ENCODE measurements at regions of chr17 and their contacts with region 1.

Region 1: DNA sequence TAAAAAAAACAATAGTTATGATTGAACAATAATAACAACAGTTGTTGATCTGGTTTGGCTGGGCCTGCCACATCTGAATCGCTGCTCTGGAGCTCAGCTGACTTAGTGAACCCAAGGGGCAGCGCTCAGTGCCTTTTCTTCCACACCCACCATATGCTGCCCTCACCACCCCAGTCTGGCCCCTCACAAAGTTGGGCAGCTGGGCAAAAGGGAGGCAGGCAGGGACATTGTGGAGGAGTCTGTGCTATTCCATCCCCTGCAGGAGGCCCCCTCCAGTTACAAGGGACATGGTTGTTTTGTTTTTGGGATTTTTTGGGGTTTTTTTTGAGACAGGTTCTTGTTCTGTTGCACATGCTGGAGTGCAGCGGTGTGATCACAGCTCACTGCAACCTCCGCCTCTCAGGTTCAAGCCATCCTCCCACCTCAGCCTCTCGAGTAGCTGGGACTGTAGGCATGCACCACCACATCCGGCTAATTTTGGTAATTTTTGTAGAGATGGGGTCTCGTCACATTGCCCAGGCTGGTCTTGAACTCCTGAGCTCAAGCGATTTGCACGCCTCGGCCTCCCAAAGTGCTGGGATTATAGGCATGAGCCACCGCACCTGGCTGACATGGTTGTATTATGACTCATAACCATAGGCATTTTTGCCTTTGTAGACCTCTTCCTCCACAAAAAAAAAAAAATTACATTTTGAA is 8.6 kb upstream of the PECAM1 start:
- DNase-seq: no peak
- H3K4me3 ChIP-seq: no peak overlapping the region
- H3K27ac ChIP-seq: no peak overlapping the region
- H3K4me1 ChIP-seq: peaks cover 13% of the 10 kb centered on the region
- H3K27me3 ChIP-seq: no peaks in the 10 kb centered on the region
- CTCF ChIP-seq: no peak

Region 2: DNA sequence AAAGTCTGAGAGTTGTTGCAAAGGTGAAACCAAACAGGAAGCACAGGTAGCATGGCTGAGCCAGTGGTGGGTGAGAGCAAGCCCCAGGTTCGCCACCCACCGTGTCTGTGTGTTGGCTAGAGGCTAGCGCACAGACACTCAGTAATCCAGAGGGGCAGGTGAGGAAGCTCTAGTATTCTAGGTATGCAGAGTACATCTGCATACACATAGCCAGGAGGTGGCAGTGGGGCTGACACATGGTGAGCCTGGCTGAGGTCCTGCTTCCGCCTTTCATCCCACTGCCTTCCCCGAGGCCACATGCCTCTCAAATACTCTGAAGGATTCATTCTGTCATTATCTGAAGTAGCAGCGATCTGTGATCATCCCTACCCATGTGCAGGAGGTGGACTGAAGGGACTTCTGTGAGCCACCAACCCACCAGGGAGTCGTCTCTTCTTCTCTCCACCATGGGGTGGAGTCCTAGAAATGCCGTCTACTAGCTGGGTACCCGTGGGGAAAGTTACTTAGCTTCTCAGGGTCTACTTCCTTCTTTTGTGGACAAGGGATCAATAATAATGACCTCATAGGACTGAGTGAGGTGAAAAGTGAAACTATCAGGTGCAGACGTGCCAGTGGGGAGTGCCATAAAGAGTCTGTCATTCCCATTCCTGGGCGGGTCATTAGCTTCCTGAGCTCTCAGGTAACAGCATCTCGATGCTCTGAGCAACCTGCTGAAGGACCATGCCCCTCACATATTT is 342.8 kb before region 1 on chr17:
- dilution Hi-C with region 1: no loop called
- DNase-seq: no peak
- H3K4me3 ChIP-seq: no peak overlapping the region
- H3K27ac ChIP-seq: no peak overlapping the region
- H3K4me1 ChIP-seq: peaks cover 1% of the 10 kb centered on the region
- H3K27me3 ChIP-seq: no peaks in the 10 kb centered on the region
- CTCF ChIP-seq: peak in 1 of 3 experiments; percentile 42

Region 3: GRCh38 chr17:64306850-64307463 is 92.3 kb before region 1 on chr17:
- dilution Hi-C with region 1: loop called (anchors 10 kb)
- DNase-seq: no peak
- H3K4me3 ChIP-seq: no peak overlapping the region
- H3K27ac ChIP-seq: no peak overlapping the region
- H3K4me1 ChIP-seq: peaks cover 4% of the 10 kb centered on the region
- H3K27me3 ChIP-seq: no peaks in the 10 kb centered on the region
- CTCF ChIP-seq: peak; percentile 67 to 75 (median 69)

Region 4: DNA sequence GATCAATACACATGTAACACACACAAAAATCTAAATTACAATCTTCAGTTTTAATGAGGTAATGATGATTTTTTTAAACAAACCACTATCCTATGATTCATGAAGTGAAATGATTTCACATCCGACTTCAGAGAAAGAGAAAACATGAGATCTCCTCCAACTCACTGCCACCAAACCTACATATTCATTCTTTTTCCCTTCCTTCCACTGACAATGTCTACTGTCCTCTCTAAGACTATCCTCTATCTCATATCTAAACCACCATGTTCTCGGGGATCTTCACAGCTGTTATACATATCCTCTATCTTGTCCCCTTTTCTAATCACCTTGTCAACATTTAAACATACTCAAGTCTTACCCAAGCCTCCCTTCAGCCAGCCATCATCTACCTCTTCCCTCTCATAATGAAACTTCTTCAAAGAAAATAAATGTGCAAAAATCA is 209.3 kb after region 1 on chr17:
- dilution Hi-C with region 1: no loop called
- DNase-seq: no peak
- H3K4me3 ChIP-seq: no peak overlapping the region
- H3K27ac ChIP-seq: no peak overlapping the region
- H3K4me1 ChIP-seq: peaks cover 9% of the 10 kb centered on the region
- H3K27me3 ChIP-seq: no peaks in the 10 kb centered on the region
- CTCF ChIP-seq: no peak